Spleen (tissue), 13 donors: ENCODE measurements at regions of chr6 and their contacts with region 1.

Region 1: DNA sequence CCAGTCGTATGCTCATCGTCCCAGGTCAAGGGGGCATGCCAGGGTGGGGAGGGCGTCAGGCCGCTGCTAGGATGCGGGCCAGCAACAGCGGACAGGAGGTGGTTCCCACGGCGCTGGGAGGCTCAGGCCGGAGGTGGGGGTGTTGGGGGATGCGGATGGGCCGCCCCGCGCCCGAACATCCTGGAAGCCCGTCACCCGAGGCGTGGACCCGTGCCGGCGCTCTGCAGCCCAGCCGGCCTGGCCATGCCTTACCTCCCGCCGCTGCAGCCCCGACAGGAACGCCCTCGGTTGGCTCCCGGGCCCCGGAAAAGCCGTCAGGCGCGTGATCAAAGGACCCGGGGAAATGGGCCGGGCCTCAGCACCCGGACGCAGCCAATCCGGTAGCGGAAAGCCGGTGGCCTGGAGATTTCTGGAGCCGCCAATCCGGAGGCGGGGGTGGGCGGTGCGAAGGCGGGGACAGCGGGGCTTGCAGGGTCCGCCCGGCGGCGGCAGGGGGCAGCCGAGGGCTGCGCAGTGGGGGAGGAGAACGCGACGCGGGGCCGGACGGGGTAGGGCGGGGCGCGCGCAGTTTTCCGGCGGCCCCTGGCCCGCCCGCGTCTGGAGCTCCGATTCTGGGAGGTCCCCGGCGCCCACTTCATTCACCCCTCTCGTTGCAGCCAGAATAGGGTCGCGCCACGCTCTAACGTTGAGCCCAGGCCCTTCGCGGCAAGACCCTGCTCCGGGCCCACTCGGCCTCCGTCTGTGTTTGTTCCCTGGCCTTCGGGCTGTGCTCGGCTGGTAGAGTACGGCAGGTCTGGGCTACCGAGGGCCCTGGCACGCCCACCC is at the start of gene SMIM29:
- DNase-seq: peak; percentile 100
- H3K4me3 ChIP-seq: peak within 1 kb of the TSS; percentile 64 to 90 (median 78)
- H3K27ac ChIP-seq: peak within 1 kb of the TSS; percentile 92 to 98 (median 94)
- H3K4me1 ChIP-seq: peaks cover 18 to 58% (median 44%) of the 10 kb centered on the region in 6 donors
- H3K27me3 ChIP-seq: no peaks in the 10 kb centered on the region
- CTCF ChIP-seq: peak; percentile 98 to 100 (median 100)
- POLR2A ChIP-seq: peak in 1 of 3 donors; percentile 52
- total RNA-seq, gene SMIM29: 24.7 to 40.7 (median 33.9) TPM

Region 2: DNA sequence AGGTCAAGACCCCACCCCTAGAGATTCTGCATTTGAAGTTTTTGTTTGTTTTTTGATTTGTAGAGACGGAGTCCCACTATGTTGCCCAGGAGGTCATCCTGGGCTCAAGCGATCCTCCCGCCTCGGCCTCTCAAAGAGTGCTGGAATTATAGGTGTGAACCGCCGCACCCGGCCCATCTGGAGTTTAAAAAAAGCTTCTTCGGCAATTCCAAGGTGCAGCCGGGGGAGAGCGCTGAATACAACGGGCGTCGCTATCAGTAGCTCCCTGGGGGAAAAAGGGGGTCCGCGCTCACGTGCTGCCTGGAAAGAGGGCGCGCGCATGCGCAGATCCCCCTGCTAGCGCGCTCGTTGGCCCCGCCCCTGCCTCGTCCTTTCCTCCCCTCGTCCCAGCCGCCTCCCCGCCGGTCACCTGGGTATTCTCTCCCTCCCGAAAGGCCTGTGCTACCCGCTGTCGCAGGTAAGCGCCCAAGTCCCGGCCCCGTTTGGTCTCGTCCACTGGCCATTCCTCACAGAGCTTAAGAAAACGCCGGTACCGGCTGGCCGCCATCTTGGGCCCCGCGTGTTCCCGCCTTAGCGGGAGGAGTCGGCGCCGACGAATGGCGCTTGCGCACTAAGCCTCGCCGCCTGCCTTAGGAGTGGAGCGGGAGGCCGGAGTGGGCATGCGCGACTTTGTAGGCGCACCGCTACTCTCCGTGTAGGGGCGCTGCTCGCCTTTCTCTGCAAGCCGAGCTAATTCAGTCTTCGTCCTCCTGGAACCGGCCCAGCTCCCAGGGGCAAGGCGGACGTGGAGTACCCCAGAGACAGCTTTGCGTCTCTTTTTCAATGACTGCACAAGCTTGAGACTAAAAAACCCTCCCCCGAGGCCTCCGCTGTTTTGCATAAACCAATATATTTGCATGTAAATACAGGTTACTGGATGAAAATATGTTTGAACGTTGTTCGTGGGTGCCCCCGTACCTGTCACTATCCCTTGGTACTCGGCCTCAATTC is 537.5 kb before region 1 on chr6 and contains the start of gene UQCC2:
- intact Hi-C with region 1: no loop called
- DNase-seq: peak; percentile 99
- H3K4me3 ChIP-seq: peak within 1 kb of the TSS; percentile 76 to 96 (median 90)
- H3K27ac ChIP-seq: peak within 1 kb of the TSS; percentile 93 to 97 (median 95)
- H3K4me1 ChIP-seq: peaks cover 10 to 49% (median 24%) of the 10 kb centered on the region in 6 donors
- H3K27me3 ChIP-seq: no peaks in the 10 kb centered on the region
- CTCF ChIP-seq: peak in 10 of 11 experiments; percentile 60 to 88 (median 70)
- POLR2A ChIP-seq: peak in 2 of 3 donors; percentile 51 to 68
- total RNA-seq, gene UQCC2: 8.7 to 34.8 (median 22.4) TPM

Region 3: GRCh38 chr6:34392497-34393190 is 143.7 kb after region 1 on chr6 and contains the start of gene NUDT3:
- intact Hi-C with region 1: loop called (anchors 2 kb)
- DNase-seq: peak; percentile 100
- H3K4me3 ChIP-seq: peak within 1 kb of the TSS; percentile 82 to 100 (median 94)
- H3K27ac ChIP-seq: peak within 1 kb of the TSS; percentile 83 to 99 (median 98)
- H3K4me1 ChIP-seq: peaks cover 12 to 60% (median 46%) of the 10 kb centered on the region in 6 donors
- H3K27me3 ChIP-seq: no peaks in the 10 kb centered on the region
- CTCF ChIP-seq: peak; percentile 74 to 97 (median 90)
- POLR2A ChIP-seq: peak in 2 of 3 donors; percentile 23 to 63
- total RNA-seq, gene NUDT3: 27.5 to 54.2 (median 44.5) TPM

Region 4: GRCh38 chr6:34414999-34415858 is 166.3 kb after region 1 on chr6:
- intact Hi-C with region 1: loop called (anchors 2 kb)
- DNase-seq: no peak
- H3K4me3 ChIP-seq: no peak overlapping the region
- H3K27ac ChIP-seq: peak overlapping the region in 7 of 8 donors; percentile 23 to 67 (median 52)
- H3K4me1 ChIP-seq: peaks cover 0 to 12% (median 5%) of the 10 kb centered on the region in 6 donors
- H3K27me3 ChIP-seq: no peaks in the 10 kb centered on the region
- CTCF ChIP-seq: peak; percentile 46 to 93 (median 77)
- POLR2A ChIP-seq: no peak